ENCODE measurements at regions of chr4 and their contacts with region 1.

Region 1: GRCh38 chr4:77044461-77045150 is 31.2 kb downstream of the CCNI start:
- DNase-seq: peak in 4 of 5 donors; percentile 28 to 38 (median 32)
- H3K4me3 ChIP-seq: no peak overlapping the region
- H3K4me3 Mint-ChIP-seq: no peak overlapping the region
- H3K27ac ChIP-seq: no peak overlapping the region
- H3K27ac Mint-ChIP-seq: peak overlapping the region in 6 of 7 donors; percentile 1 to 83 (median 50)
- H3K4me1 ChIP-seq: peaks cover 9% of the 10 kb centered on the region
- H3K4me1 Mint-ChIP-seq: peaks cover 5 to 10% (median 8%) of the 10 kb centered on the region in 4 donors
- H3K27me3 ChIP-seq: no peaks in the 10 kb centered on the region
- H3K27me3 Mint-ChIP-seq: no peaks in the 10 kb centered on the region

Region 2: GRCh38 chr4:76511947-76512346 is 532.7 kb before region 1 on chr4:
- CTCF ChIA-PET with region 1: no interaction called
- POLR2A ChIA-PET with region 1: no interaction called
- intact Hi-C with region 1: loop called (anchors 2 kb)
- DNase-seq: no peak
- H3K4me3 ChIP-seq: no peak overlapping the region
- H3K4me3 Mint-ChIP-seq: no peak overlapping the region
- H3K27ac ChIP-seq: no peak overlapping the region
- H3K27ac Mint-ChIP-seq: no peak overlapping the region
- H3K4me1 ChIP-seq: no peaks in the 10 kb centered on the region
- H3K4me1 Mint-ChIP-seq: no peaks in the 10 kb centered on the region
- H3K27me3 ChIP-seq: no peaks in the 10 kb centered on the region
- H3K27me3 Mint-ChIP-seq: no peaks in the 10 kb centered on the region

Region 3: DNA sequence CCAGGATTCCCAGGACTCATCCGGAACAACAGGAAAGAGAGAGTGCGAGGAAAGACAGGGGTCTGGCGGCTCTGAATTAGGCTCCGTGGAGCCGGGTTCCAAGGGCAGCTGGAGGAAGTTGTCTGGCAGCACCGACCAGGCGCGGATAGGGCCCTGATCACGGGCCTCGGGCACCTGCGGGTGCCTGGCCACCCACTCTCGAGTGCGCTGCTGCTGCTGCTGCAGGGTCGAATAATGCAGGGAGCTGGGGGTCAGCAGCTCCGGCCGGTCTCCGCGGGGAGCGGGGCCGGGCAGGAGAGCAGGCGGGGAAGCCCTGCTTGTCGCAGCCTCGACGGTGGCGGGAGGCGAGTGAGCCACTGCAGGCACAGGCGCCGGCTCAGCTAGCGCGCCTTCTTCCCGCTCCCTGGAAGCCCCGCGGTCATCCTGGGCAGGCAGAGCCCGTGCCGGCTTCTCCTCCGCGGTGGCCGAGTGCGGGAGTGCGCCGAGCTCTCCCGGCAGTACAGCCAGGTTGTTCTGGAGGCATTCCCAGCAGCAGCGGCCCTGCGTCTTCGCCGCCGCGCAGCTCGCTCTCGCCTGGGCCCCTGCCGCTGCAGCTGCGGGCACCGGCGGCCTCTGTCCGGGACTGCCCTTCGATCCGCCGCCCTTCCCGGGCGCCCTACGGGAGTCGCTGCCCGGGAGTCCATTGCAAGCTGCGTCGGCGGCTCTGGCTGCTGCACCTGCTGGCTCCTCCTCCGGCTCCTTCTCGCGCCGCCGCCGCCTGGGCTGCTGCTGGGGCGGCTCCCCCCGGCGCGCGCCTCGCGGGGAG is 147.7 kb before region 1 on chr4:
- CTCF ChIA-PET with region 1: interaction called, 3 read pairs
- POLR2A ChIA-PET with region 1: no interaction called
- intact Hi-C with region 1: loop called (anchors 5 kb)
- DNase-seq: peak; percentile 33 to 41 (median 35)
- H3K4me3 ChIP-seq: peak overlapping the region in 1 of 2 donors; percentile 49
- H3K4me3 Mint-ChIP-seq: peak overlapping the region in 6 of 8 donors; percentile 29 to 67 (median 46)
- H3K27ac ChIP-seq: no peak overlapping the region
- H3K27ac Mint-ChIP-seq: no peak overlapping the region
- H3K4me1 ChIP-seq: peaks cover 4% of the 10 kb centered on the region
- H3K4me1 Mint-ChIP-seq: peaks cover 8 to 14% (median 10%) of the 10 kb centered on the region in 4 donors
- H3K27me3 ChIP-seq: peaks cover 23% of the 10 kb centered on the region
- H3K27me3 Mint-ChIP-seq: peaks cover 27 to 37% of the 10 kb centered on the region in 2 donors

Region 4: GRCh38 chr4:76984127-76984526 is 60.5 kb before region 1 on chr4:
- CTCF ChIA-PET with region 1: interaction called, 27 read pairs
- POLR2A ChIA-PET with region 1: no interaction called
- intact Hi-C with region 1: no loop called
- DNase-seq: peak in 4 of 5 donors; percentile 36 to 56 (median 45)
- H3K4me3 ChIP-seq: peak overlapping the region in 1 of 2 donors; percentile 3
- H3K4me3 Mint-ChIP-seq: peak overlapping the region in 7 of 8 donors; percentile 34 to 85 (median 68)
- H3K27ac ChIP-seq: no peak overlapping the region
- H3K27ac Mint-ChIP-seq: peak overlapping the region; percentile 48 to 93 (median 80)
- H3K4me1 ChIP-seq: peaks cover 76% of the 10 kb centered on the region
- H3K4me1 Mint-ChIP-seq: peaks cover 61 to 95% (median 78%) of the 10 kb centered on the region in 4 donors
- H3K27me3 ChIP-seq: no peaks in the 10 kb centered on the region
- H3K27me3 Mint-ChIP-seq: no peaks in the 10 kb centered on the region

Region 5: GRCh38 chr4:77025643-77026321 is 18.8 kb before region 1 on chr4:
- CTCF ChIA-PET with region 1: interaction called, 55 read pairs
- POLR2A ChIA-PET with region 1: no interaction called
- intact Hi-C with region 1: loop called (anchors 1 kb)
- DNase-seq: no peak
- H3K4me3 ChIP-seq: no peak overlapping the region
- H3K4me3 Mint-ChIP-seq: no peak overlapping the region
- H3K27ac ChIP-seq: no peak overlapping the region
- H3K27ac Mint-ChIP-seq: no peak overlapping the region
- H3K4me1 ChIP-seq: peaks cover 9% of the 10 kb centered on the region
- H3K4me1 Mint-ChIP-seq: peaks cover 12 to 14% (median 12%) of the 10 kb centered on the region in 4 donors
- H3K27me3 ChIP-seq: no peaks in the 10 kb centered on the region
- H3K27me3 Mint-ChIP-seq: no peaks in the 10 kb centered on the region

Region 6: GRCh38 chr4:77095101-77095821 is 50.7 kb after region 1 on chr4:
- CTCF ChIA-PET with region 1: interaction called, 14 read pairs
- POLR2A ChIA-PET with region 1: no interaction called
- intact Hi-C with region 1: no loop called
- DNase-seq: peak; percentile 58 to 70 (median 64)
- H3K4me3 ChIP-seq: no peak overlapping the region
- H3K4me3 Mint-ChIP-seq: no peak overlapping the region
- H3K27ac ChIP-seq: no peak overlapping the region
- H3K27ac Mint-ChIP-seq: peak overlapping the region in 1 of 7 donors; percentile 5
- H3K4me1 ChIP-seq: peaks cover 11% of the 10 kb centered on the region
- H3K4me1 Mint-ChIP-seq: peaks cover 9 to 19% (median 13%) of the 10 kb centered on the region in 4 donors
- H3K27me3 ChIP-seq: no peaks in the 10 kb centered on the region
- H3K27me3 Mint-ChIP-seq: no peaks in the 10 kb centered on the region

Region 7: GRCh38 chr4:78396613-78397291 is 1352.1 kb after region 1 on chr4:
- CTCF ChIA-PET with region 1: no interaction called
- POLR2A ChIA-PET with region 1: no interaction called
- intact Hi-C with region 1: no loop called
- DNase-seq: no peak
- H3K4me3 ChIP-seq: no peak overlapping the region
- H3K4me3 Mint-ChIP-seq: no peak overlapping the region
- H3K27ac ChIP-seq: no peak overlapping the region
- H3K27ac Mint-ChIP-seq: no peak overlapping the region
- H3K4me1 ChIP-seq: no peaks in the 10 kb centered on the region
- H3K4me1 Mint-ChIP-seq: no peaks in the 10 kb centered on the region
- H3K27me3 ChIP-seq: no peaks in the 10 kb centered on the region
- H3K27me3 Mint-ChIP-seq: peaks cover 2 to 6% of the 10 kb centered on the region in 2 donors